Heart right ventricle (tissue), 16 donors: ENCODE measurements at regions of chr6 and their contacts with region 1.

Region 1: GRCh38 chr6:134182528-134182927 is 130.1 kb upstream of the SLC2A12 start:
- DNase-seq: no peak
- ATAC-seq: no peak
- H3K4me3 ChIP-seq: no peak overlapping the region
- H3K27ac ChIP-seq: no peak overlapping the region
- H3K4me1 ChIP-seq: peaks cover 0 to 19% (median 7%) of the 10 kb centered on the region in 9 donors
- H3K27me3 ChIP-seq: no peaks in the 10 kb centered on the region
- CTCF ChIP-seq: no peak

Region 2: DNA sequence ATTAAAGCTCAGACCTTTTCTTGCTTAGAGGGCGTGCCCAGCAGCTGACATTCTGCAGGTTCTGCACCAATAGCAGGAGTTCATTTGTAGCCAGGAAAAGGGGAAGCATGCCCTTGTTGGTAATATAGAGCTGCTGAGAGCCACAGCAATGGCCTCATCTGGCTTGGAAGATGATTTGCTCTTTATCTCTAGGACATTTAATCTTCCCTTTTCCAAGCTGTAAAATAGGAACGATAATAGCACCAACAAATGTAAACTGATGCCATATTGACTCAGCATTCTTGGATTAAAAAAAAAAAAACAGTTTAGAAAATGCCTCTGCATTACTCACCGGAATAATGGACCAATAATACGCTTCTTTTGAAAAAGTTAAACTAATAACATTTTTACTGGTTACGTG is 36.7 kb before region 1 on chr6:
- intact Hi-C with region 1: no loop called
- DNase-seq: no peak
- ATAC-seq: peak in 1 of 8 donors; percentile 16
- H3K4me3 ChIP-seq: no peak overlapping the region
- H3K27ac ChIP-seq: no peak overlapping the region
- H3K4me1 ChIP-seq: peaks cover 0 to 4% (median 0%) of the 10 kb centered on the region in 9 donors
- H3K27me3 ChIP-seq: no peaks in the 10 kb centered on the region
- CTCF ChIP-seq: no peak

Region 3: DNA sequence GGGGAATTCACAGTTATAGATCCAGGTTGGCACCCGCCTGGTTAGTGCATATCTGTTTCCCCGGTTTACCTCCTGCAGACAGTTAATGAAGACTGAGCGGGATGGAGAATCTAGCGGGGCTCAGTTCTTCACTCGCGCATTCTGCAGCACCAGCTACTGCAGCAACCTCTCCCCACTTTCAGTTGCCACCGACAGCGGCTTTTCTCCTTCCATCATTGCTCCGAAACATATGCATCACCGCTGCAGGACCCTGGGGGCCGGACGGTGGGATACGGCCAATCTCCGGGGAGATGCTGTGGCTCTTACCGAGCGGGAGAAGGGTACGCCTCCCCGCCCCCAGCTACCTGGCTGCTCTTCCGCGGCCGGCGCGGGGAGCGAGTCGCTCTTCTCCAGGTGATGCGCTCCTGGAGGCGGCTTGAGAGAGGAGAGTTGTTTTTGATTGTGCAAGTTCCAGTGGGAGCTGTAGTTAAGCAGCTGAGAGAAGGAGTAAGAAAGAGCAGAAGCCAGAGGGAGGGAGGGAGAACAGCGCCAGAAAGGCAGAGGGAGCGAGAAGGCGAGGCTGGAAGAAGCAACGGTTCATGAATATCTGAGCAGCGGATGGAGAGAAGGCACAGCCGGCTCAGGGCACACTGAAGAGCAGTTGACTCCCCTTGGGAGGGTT is 135.1 kb after region 1 on chr6 and contains the start of gene SGK1:
- intact Hi-C with region 1: loop called in 1 of 10 experiments (anchors 10 kb)
- DNase-seq: peak in 1 of 2 donors; percentile 24
- ATAC-seq: peak; percentile 53 to 83 (median 78)
- H3K4me3 ChIP-seq: peak within 1 kb of the TSS; percentile 1 to 74 (median 64)
- H3K27ac ChIP-seq: peak within 1 kb of the TSS in 7 of 10 donors; percentile 1 to 67 (median 57)
- H3K4me1 ChIP-seq: peaks cover 0 to 23% (median 14%) of the 10 kb centered on the region in 9 donors
- H3K27me3 ChIP-seq: peaks cover 0 to 25% (median 3%) of the 10 kb centered on the region in 7 donors
- CTCF ChIP-seq: peak in 1 of 9 donors; percentile 14
- total RNA-seq, gene SGK1: 22.5 to 140 (median 39.6) TPM

Region 4: DNA sequence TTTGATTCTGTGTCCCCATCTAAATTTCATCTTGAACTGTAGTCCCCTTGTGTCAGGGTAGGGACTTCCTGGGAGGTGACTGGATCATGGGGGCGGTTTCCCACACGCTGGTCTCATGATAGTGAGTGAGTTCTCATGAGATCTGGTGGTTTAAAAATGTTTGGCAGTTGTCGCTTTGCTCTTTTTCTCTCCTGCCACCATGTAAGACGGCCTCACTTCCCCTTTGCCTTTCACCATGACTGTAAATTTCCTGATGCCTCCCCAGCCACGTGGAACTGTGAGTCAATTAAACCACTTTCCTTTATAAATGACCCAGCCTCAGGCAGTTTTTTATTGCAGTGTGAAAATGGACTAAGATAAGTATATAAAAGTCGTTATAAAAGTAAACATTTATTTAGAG is 215.9 kb after region 1 on chr6:
- intact Hi-C with region 1: no loop called
- DNase-seq: no peak
- ATAC-seq: peak in 1 of 8 donors; percentile 30
- H3K4me3 ChIP-seq: no peak overlapping the region
- H3K27ac ChIP-seq: peak overlapping the region in 1 of 10 donors; percentile 27
- H3K4me1 ChIP-seq: peaks cover 0 to 6% (median 0%) of the 10 kb centered on the region in 9 donors
- H3K27me3 ChIP-seq: no peaks in the 10 kb centered on the region
- CTCF ChIP-seq: no peak

Region 5: GRCh38 chr6:134416418-134417154 is 234.1 kb after region 1 on chr6:
- intact Hi-C with region 1: loop called in 2 of 10 experiments (anchors 5 kb)
- DNase-seq: no peak
- ATAC-seq: no peak
- H3K4me3 ChIP-seq: no peak overlapping the region
- H3K27ac ChIP-seq: peak overlapping the region in 1 of 10 donors; percentile 24
- H3K4me1 ChIP-seq: peaks cover 0 to 49% (median 8%) of the 10 kb centered on the region in 9 donors
- H3K27me3 ChIP-seq: no peaks in the 10 kb centered on the region
- CTCF ChIP-seq: no peak

Region 6: DNA sequence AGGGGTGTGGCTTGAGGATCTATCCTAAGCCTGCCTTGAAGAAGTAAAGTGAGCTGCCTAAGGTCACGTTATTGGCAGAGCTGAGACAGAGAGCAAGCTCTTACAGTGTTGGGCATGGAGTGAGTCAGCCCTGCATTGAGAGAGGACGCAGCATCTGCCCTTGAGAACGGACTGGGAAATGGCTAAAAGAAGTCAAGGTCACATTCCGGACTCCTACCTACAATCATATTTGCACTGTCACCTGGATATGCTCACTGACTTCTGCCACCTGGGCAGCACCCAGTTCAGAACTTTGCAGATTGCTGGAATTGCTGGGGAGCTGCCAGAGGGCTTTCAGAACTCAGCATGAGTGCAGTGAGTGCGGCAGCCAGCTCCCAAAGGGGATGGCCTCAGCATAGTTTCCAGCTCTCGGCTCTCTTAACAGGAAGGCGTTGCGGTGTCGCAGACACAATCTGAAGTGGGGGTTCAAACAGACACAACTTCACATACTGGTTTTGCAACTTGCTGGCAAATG is 334.7 kb after region 1 on chr6:
- intact Hi-C with region 1: loop called in 7 of 10 experiments (anchors 5 to 10 kb)
- DNase-seq: peak; percentile 72 to 84
- ATAC-seq: peak; percentile 84 to 96 (median 94)
- H3K4me3 ChIP-seq: peak overlapping the region in 6 of 10 donors; percentile 1 to 25 (median 12)
- H3K27ac ChIP-seq: peak overlapping the region; percentile 8 to 89 (median 74)
- H3K4me1 ChIP-seq: peaks cover 0 to 65% (median 51%) of the 10 kb centered on the region in 9 donors
- H3K27me3 ChIP-seq: no peaks in the 10 kb centered on the region
- CTCF ChIP-seq: no peak